Sigmoid colon (tissue), 7 donors: ENCODE measurements at regions of chr16 and their contacts with region 1.

Region 1: GRCh38 chr16:67521095-67521804 is 7.4 kb upstream of the RIPOR1 start:
- DNase-seq: peak; percentile 98
- H3K4me3 ChIP-seq: peak overlapping the region; percentile 26 to 52 (median 50)
- H3K27ac ChIP-seq: peak overlapping the region; percentile 94 to 96 (median 96)
- H3K4me1 ChIP-seq: peaks cover 0 to 16% (median 12%) of the 10 kb centered on the region in 4 donors
- H3K27me3 ChIP-seq: no peaks in the 10 kb centered on the region
- CTCF ChIP-seq: peak; percentile 84 to 96 (median 89)
- EP300 ChIP-seq: no peak
- POLR2A ChIP-seq: no peak

Region 2: GRCh38 chr16:67490335-67491096 is 30.7 kb before region 1 on chr16:
- intact Hi-C with region 1: no loop called
- DNase-seq: no peak
- H3K4me3 ChIP-seq: no peak overlapping the region
- H3K27ac ChIP-seq: peak overlapping the region; percentile 46 to 83 (median 77)
- H3K4me1 ChIP-seq: peaks cover 5 to 40% (median 27%) of the 10 kb centered on the region in 4 donors
- H3K27me3 ChIP-seq: no peaks in the 10 kb centered on the region
- CTCF ChIP-seq: no peak
- EP300 ChIP-seq: no peak
- POLR2A ChIP-seq: no peak

Region 3: GRCh38 chr16:67561824-67562525 is 40.7 kb after region 1 on chr16:
- intact Hi-C with region 1: loop called (anchors 2 kb)
- DNase-seq: peak; percentile 98
- H3K4me3 ChIP-seq: peak overlapping the region; percentile 79 to 96 (median 90)
- H3K27ac ChIP-seq: peak overlapping the region; percentile 98 to 99 (median 98)
- H3K4me1 ChIP-seq: peaks cover 0 to 30% (median 24%) of the 10 kb centered on the region in 4 donors
- H3K27me3 ChIP-seq: no peaks in the 10 kb centered on the region
- CTCF ChIP-seq: no peak
- EP300 ChIP-seq: peak in 1 of 4 donors; percentile 18
- POLR2A ChIP-seq: peak; percentile 32 to 52

Region 4: GRCh38 chr16:67667817-67668494 is 146.7 kb after region 1 on chr16:
- intact Hi-C with region 1: loop called (anchors 1 kb)
- DNase-seq: peak; percentile 95
- H3K4me3 ChIP-seq: peak overlapping the region; percentile 76 to 99 (median 84)
- H3K27ac ChIP-seq: peak overlapping the region; percentile 91 to 95 (median 92)
- H3K4me1 ChIP-seq: peaks cover 0 to 33% (median 28%) of the 10 kb centered on the region in 4 donors
- H3K27me3 ChIP-seq: no peaks in the 10 kb centered on the region
- CTCF ChIP-seq: peak; percentile 80 to 90 (median 87)
- EP300 ChIP-seq: no peak
- POLR2A ChIP-seq: no peak

Region 5: GRCh38 chr16:67841764-67842508 is 320.7 kb after region 1 on chr16 and contains the start of gene THAP11:
- intact Hi-C with region 1: loop called (anchors 10 kb)
- DNase-seq: peak; percentile 97
- H3K4me3 ChIP-seq: peak within 1 kb of the TSS; percentile 61 to 94 (median 78)
- H3K27ac ChIP-seq: peak within 1 kb of the TSS; percentile 96 to 99 (median 99)
- H3K4me1 ChIP-seq: peaks cover 0 to 42% (median 40%) of the 10 kb centered on the region in 4 donors
- H3K27me3 ChIP-seq: no peaks in the 10 kb centered on the region
- CTCF ChIP-seq: peak; percentile 79 to 93 (median 88)
- EP300 ChIP-seq: no peak
- POLR2A ChIP-seq: no peak
- total RNA-seq, gene THAP11: 63.9 to 85.6 (median 75.2) TPM